Activated naive CD4-positive, alpha-beta T cell treated with anti-CD3 and anti-CD28 coated beads, Interleukin-2, amount 10 ng/mL, durations not matched to agents 7 days and 5 days (primary cell): ENCODE measurements at regions of chr15 and their contacts with region 1.

Region 1: GRCh38 chr15:80970018-80970658 is 19.5 kb downstream of the MESD start:
- DNase-seq: peak; percentile 70
- H3K4me3 Mint-ChIP-seq: no peak overlapping the region
- H3K27ac Mint-ChIP-seq: no peak overlapping the region
- H3K4me1 Mint-ChIP-seq: peaks cover 3% of the 10 kb centered on the region
- H3K27me3 Mint-ChIP-seq: no peaks in the 10 kb centered on the region

Region 2: GRCh38 chr15:80455668-80456442 is 514.3 kb before region 1 on chr15:
- CTCF ChIA-PET with region 1: interaction called, 34 read pairs
- DNase-seq: peak; percentile 67
- H3K4me3 Mint-ChIP-seq: no peak overlapping the region
- H3K27ac Mint-ChIP-seq: no peak overlapping the region
- H3K4me1 Mint-ChIP-seq: no peaks in the 10 kb centered on the region
- H3K27me3 Mint-ChIP-seq: peaks cover 29% of the 10 kb centered on the region

Region 3: DNA sequence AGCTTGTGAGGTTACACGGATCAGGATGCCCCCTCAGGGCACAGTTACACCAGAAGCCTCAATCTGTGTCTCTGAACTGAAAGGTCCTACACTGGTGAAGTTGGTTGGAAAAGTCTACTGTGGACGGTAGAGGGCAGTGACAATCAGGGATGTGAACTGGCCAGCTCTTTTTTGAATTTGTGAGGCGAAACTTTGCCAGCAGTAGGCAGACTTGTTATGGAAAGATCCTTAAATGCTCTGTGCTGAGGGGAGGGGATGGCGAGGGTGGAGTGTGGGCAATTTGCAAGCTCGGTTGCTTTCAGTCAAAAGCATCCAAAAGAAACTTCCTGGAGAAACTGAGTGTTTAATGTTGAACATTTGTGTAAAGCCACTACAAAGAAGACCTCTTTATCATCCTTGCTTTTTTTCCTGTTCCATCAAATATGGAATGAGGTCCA is 402.4 kb before region 1 on chr15:
- CTCF ChIA-PET with region 1: interaction called, 15 read pairs
- DNase-seq: peak; percentile 30
- H3K4me3 Mint-ChIP-seq: no peak overlapping the region
- H3K27ac Mint-ChIP-seq: no peak overlapping the region
- H3K4me1 Mint-ChIP-seq: no peaks in the 10 kb centered on the region
- H3K27me3 Mint-ChIP-seq: peaks cover 34% of the 10 kb centered on the region

Region 4: GRCh38 chr15:80776420-80777045 is 193.6 kb before region 1 on chr15:
- CTCF ChIA-PET with region 1: interaction called, 20 read pairs
- DNase-seq: peak; percentile 74
- H3K4me3 Mint-ChIP-seq: no peak overlapping the region
- H3K27ac Mint-ChIP-seq: no peak overlapping the region
- H3K4me1 Mint-ChIP-seq: peaks cover 14% of the 10 kb centered on the region
- H3K27me3 Mint-ChIP-seq: peaks cover 60% of the 10 kb centered on the region